CD14-positive monocyte (primary cell): ENCODE measurements at regions of chr13 and their contacts with region 1.

Region 1: GRCh38 chr13:48126944-48127830 is 32.3 kb upstream of the MED4 start:
- DNase-seq: peak; percentile 57 to 81 (median 72)
- H3K4me3 ChIP-seq: no peak overlapping the region
- H3K4me3 Mint-ChIP-seq: no peak overlapping the region
- H3K27ac ChIP-seq: peak overlapping the region in 1 of 2 donors; percentile 58
- H3K27ac Mint-ChIP-seq: peak overlapping the region in 6 of 7 donors; percentile 47 to 85 (median 80)
- H3K4me1 ChIP-seq: peaks cover 9 to 10% of the 10 kb centered on the region in 2 donors
- H3K4me1 Mint-ChIP-seq: peaks cover 10% of the 10 kb centered on the region
- H3K27me3 ChIP-seq: no peaks in the 10 kb centered on the region
- H3K27me3 Mint-ChIP-seq: peaks cover 0 to 7% (median under 1%) of the 10 kb centered on the region in 3 donors
- CTCF ChIP-seq: peak; percentile 81

Region 2: GRCh38 chr13:48194379-48194754 is 67.2 kb after region 1 on chr13:
- intact Hi-C with region 1: loop called in 1 of 2 experiments (anchors 10 kb)
- DNase-seq: peak; percentile 84 to 89 (median 86)
- H3K4me3 ChIP-seq: peak overlapping the region; percentile 18 to 62 (median 37)
- H3K4me3 Mint-ChIP-seq: peak overlapping the region; percentile 48 to 80
- H3K27ac ChIP-seq: peak overlapping the region; percentile 78 to 91
- H3K27ac Mint-ChIP-seq: peak overlapping the region; percentile 90 to 95 (median 93)
- H3K4me1 ChIP-seq: peaks cover 35 to 37% of the 10 kb centered on the region in 2 donors
- H3K4me1 Mint-ChIP-seq: peaks cover 31% of the 10 kb centered on the region
- H3K27me3 ChIP-seq: no peaks in the 10 kb centered on the region
- H3K27me3 Mint-ChIP-seq: peaks cover 0 to 7% (median 2%) of the 10 kb centered on the region in 3 donors
- CTCF ChIP-seq: no peak